ENCODE measurements at regions of chr3 and their contacts with region 1.

Region 1: DNA sequence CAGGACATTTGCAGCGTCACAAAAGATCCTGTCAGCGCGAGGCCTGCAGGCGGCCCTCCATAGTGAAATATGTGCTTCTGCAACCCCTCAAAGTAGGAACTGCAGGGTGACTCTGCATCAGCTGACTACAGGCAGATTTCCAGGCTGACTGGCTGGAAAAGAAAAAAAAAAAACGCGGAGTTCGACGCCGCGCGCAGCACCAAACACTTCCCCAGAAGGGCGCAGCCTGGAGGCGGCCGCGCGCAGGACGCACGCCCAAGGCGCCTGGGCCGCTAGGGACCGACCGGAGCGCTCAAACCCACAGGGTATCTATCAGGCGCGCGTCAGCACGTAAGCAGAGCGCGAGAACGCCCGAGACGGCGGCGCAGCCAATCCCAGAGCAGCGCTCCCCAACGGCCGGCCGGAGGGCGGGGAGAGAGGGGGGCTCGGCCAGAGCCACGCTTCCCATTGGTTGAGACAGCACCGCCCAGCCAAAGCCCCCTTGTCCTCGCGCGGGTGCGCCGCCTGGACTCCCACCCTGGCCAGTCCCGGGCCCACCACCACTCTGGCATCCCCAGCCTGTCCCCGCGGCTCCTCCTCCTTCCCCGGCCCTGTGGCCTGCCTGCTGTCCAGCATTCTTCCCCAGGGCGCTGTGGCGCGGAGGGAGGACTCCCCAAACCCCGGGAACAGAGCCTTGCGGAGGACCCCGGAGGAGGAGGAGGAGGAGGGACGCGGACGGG is 1.0 kb downstream of the BDH1 start:
- DNase-seq: peak; percentile 93
- H3K4me3 Mint-ChIP-seq: peak overlapping the region; percentile 93
- H3K27ac Mint-ChIP-seq: peak overlapping the region; percentile 97
- H3K4me1 Mint-ChIP-seq: peaks cover 39% of the 10 kb centered on the region
- H3K27me3 Mint-ChIP-seq: peaks cover 4% of the 10 kb centered on the region

Region 2: DNA sequence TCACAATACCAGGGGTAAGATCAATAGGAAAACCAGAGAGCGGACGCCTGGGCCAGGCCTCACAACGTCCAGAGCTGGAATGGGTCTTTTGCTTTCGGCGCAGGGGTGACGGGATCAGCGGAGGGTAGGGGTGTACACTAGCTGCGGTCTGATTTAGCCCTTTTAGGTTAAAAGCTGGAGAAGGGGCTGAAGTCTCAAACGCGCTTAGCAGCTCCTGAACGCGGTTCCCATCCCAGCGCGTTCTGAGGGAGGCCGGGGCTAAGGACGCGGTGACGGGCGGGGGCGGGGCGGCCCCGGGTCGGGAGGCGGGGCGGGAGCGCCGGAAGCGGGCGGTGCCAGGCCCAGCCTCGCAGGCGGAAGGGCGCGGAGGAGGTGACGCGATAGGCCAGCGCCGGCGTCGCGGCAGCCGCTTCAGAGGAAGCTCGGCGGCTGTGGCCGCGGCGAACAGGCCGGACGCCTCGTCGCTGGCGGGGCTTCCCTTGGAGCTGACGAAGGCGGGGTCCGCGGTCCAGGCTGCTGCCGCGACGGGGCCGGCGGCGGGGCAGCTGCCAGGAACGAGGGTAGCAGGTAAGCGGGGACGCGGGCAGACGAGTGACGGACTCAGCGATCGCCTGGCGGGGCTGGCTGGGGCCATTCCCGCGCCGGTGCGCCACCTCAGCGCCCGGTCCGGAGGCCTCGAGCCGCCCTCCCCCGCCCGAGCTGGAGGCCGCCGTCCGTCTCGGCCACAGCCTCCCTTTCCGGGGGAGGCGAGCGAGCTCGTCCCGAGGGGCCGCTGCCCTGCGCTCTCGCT is 687.0 kb before region 1 on chr3 and contains the start of gene SENP5:
- intact Hi-C with region 1: loop called (anchors 2 kb)
- DNase-seq: peak; percentile 86
- H3K4me3 Mint-ChIP-seq: peak within 1 kb of the TSS; percentile 100
- H3K27ac Mint-ChIP-seq: peak within 1 kb of the TSS; percentile 98
- H3K4me1 Mint-ChIP-seq: peaks cover 12% of the 10 kb centered on the region
- H3K27me3 Mint-ChIP-seq: peaks cover 4% of the 10 kb centered on the region
- total RNA-seq, gene SENP5: 45.3 and 50.7 TPM in 2 replicates

Region 3: DNA sequence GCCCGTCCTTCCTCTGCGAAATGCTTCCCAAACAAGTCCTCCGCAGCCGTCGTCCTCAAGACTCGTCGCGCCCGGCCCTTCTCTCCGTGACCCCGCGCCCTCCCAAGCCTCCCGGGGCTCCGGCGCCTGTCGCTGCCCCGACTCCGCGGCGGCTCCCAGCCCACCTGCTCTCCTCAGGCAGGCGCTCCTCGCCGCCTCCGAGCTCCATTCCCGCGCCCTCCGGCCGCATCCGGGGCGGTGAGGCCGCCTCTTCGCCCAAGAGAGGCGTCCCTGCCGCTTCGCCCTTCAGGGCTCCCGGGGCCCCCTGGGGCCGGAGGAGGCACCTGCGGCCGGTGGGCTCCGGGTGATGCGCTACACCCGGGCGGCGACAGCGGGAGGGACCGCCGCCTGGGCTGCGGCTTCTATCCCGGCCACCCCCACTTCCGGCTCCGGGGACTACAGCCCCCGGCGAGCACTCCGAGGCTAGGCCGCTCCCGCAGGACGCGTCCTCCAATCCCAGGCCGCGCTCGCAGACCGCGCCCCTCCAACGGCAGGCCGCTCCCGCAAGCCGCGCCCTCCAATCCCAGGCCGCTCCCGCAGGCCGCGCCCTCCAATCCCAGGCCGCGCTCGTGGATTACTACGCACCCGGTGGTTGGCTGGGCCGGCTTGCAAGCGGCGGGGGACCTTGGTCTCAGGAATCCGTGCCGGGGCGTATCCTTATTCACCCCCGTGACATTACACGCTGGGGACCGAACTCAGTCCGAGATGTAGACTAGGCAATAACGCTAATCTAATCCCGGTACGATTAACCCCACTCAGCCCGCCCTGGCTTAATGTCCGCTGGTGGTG is 182.0 kb after region 1 on chr3 and contains the start of gene RUBCN:
- intact Hi-C with region 1: loop called (anchors 1 kb)
- DNase-seq: peak; percentile 94
- H3K4me3 Mint-ChIP-seq: peak within 1 kb of the TSS; percentile 90
- H3K27ac Mint-ChIP-seq: peak within 1 kb of the TSS; percentile 95
- H3K4me1 Mint-ChIP-seq: peaks cover 36% of the 10 kb centered on the region
- H3K27me3 Mint-ChIP-seq: peaks cover 4% of the 10 kb centered on the region
- total RNA-seq, gene RUBCN: 44.7 and 45.2 TPM in 2 replicates

Measured in activated T-helper 1 cell treated with anti-CD3 and anti-CD28 coated beads, Interleukin-12 subunit alpha, Interleukin-12 subunit beta, Interleukin-2, Interleukin-4 antibody, amounts not matched to agents 30 ng/mL and 10 ng/mL and 1 ng/mL, durations not matched to agents 14 hours and 24 hours and 36 hours (primary cell).